ENCODE measurements at regions of chr3 and their contacts with region 1.

Region 1: DNA sequence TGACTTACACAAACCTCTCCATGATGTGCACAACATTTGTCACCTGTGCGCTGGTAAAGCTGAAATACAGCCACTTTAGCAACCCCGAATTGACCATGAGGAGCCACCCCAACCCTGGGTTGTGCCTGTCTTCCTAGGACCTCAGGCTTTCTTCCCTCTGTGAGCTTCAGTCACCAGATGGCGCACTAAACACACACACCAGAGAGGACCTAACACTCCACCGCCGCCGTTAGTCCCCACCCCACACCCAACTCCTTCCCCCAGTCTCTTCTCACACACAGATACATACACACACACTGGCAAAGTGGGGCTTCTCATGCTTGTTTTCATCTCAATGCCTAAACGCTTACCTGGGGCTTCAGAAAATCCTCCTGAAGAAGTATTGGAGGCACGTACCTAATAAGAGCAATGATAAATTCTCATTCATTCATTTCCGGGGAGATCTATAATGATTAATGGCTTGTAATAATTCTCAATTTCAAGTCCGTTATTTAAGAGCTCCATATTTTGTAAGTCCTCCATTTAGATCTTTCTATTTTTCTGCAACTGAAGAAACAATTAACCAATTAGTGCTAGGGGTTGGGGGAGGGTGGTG is 2.1 kb upstream of the CCDC80 start:
- DNase-seq: peak; percentile 92
- ATAC-seq: peak; percentile 96
- H3K4me3 Mint-ChIP-seq: peak overlapping the region; percentile 38
- H3K27ac Mint-ChIP-seq: no peak overlapping the region
- H3K4me1 Mint-ChIP-seq: peaks cover 15% of the 10 kb centered on the region
- H3K27me3 Mint-ChIP-seq: peaks cover 17% of the 10 kb centered on the region
- CTCF ChIP-seq: peak; percentile 71

Region 2: DNA sequence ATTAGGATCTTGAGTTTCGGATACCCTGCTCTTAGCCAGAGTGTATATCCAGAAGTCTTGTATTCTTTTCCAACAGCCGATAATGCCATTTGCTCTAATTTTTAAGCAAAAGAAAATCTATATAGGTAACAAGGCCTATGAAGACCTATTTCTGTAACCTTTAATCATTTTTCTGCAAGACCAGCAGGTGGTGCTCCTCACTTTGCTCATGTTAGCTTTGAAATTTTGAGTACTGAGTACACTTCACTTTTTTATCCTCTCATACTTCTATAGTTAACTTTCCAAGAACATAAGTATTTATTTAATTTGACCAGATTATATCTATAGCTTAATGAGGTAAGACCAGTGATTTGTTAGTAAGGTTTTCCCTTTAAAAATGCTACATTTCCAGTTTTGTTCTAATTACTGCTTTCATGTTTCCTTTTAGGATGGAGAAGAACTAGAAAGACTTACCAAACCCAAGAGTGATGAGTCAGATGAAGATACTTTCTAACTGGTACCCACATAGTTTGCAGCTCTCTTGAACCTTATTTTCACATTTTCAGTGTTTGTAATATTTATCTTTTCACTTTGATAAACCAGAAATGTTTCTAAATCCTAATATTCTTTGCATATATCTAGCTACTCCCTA is 60.6 kb before region 1 on chr3:
- CTCF ChIA-PET with region 1: interaction called, 28 read pairs
- POLR2A ChIA-PET with region 1: no interaction called
- intact Hi-C with region 1: no loop called
- DNase-seq: peak; percentile 24
- ATAC-seq: peak; percentile 55
- H3K4me3 Mint-ChIP-seq: no peak overlapping the region
- H3K27ac Mint-ChIP-seq: no peak overlapping the region
- H3K4me1 Mint-ChIP-seq: peaks cover 4% of the 10 kb centered on the region
- H3K27me3 Mint-ChIP-seq: no peaks in the 10 kb centered on the region
- CTCF ChIP-seq: peak; percentile 43

Region 3: DNA sequence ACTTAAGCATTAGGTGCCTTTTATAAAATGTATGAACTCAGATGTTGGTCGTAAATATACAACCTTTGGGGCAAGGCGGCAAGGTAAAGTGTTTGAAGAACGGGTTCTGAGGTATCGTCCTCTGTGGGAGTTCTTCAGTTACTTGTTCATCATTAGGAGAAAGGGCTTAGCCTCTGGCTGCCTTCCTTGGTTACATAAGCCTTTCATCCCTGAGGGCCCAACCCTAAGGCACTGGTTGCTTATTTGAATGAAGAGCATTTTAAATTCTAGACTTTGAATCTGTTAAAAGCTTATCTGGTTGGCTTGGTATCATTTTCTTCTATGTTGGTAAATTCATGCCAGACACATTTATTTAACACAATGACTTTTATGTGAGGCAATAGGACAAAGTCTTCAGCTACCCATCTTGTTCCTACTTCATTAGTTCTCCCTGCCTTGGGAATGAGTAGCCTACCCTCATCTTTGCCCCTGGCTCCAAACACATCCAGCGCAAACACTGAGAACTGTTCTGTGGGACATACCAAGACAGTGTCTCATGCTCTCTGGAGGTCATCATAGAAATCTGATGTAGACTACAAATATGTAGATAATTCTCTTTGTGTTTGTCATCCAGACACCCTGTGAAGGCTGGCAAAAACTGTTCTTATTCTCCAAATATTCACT is 10.3 kb after region 1 on chr3:
- CTCF ChIA-PET with region 1: interaction called, 37 read pairs
- POLR2A ChIA-PET with region 1: no interaction called
- intact Hi-C with region 1: no loop called
- DNase-seq: no peak
- ATAC-seq: no peak
- H3K4me3 Mint-ChIP-seq: no peak overlapping the region
- H3K27ac Mint-ChIP-seq: no peak overlapping the region
- H3K4me1 Mint-ChIP-seq: peaks cover 9% of the 10 kb centered on the region
- H3K27me3 Mint-ChIP-seq: no peaks in the 10 kb centered on the region
- CTCF ChIP-seq: no peak

Region 4: DNA sequence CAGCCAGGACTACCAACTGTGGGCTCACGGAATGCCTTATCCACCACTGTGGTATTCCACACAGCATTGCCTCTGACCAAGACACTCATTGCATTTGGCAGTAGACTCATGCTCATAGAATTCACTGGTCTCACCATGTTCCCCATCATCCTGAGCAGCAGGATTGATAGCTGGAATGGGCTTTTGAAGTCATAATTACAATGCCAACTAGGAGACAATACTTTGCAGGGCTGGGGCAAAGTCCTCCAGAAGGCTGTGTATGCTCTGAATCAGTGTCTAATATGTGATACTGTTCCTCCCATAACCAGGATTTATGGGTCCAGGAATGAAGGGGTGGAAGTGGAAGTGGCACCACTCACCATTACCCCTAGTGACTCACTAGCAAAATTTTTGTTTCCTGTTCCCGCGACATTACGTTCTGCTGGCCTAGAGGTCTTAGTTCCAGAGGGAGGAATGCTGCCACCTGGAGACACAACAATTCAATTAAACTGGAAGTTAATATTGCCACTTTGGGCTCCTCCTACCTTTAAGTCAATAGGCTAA is 56.5 kb after region 1 on chr3:
- CTCF ChIA-PET with region 1: interaction called, 10 read pairs
- POLR2A ChIA-PET with region 1: no interaction called
- intact Hi-C with region 1: no loop called
- DNase-seq: no peak
- ATAC-seq: no peak
- H3K4me3 Mint-ChIP-seq: no peak overlapping the region
- H3K27ac Mint-ChIP-seq: no peak overlapping the region
- H3K4me1 Mint-ChIP-seq: no peaks in the 10 kb centered on the region
- H3K27me3 Mint-ChIP-seq: peaks cover 7% of the 10 kb centered on the region
- CTCF ChIP-seq: no peak

Region 5: GRCh38 chr3:112973325-112974177 is 330.5 kb after region 1 on chr3:
- CTCF ChIA-PET with region 1: interaction called, 63 read pairs
- POLR2A ChIA-PET with region 1: no interaction called
- intact Hi-C with region 1: no loop called
- DNase-seq: peak; percentile 77
- ATAC-seq: peak; percentile 81
- H3K4me3 Mint-ChIP-seq: peak overlapping the region; percentile 73
- H3K27ac Mint-ChIP-seq: peak overlapping the region; percentile 82
- H3K4me1 Mint-ChIP-seq: peaks cover 85% of the 10 kb centered on the region
- H3K27me3 Mint-ChIP-seq: no peaks in the 10 kb centered on the region
- CTCF ChIP-seq: no peak

Region 6: DNA sequence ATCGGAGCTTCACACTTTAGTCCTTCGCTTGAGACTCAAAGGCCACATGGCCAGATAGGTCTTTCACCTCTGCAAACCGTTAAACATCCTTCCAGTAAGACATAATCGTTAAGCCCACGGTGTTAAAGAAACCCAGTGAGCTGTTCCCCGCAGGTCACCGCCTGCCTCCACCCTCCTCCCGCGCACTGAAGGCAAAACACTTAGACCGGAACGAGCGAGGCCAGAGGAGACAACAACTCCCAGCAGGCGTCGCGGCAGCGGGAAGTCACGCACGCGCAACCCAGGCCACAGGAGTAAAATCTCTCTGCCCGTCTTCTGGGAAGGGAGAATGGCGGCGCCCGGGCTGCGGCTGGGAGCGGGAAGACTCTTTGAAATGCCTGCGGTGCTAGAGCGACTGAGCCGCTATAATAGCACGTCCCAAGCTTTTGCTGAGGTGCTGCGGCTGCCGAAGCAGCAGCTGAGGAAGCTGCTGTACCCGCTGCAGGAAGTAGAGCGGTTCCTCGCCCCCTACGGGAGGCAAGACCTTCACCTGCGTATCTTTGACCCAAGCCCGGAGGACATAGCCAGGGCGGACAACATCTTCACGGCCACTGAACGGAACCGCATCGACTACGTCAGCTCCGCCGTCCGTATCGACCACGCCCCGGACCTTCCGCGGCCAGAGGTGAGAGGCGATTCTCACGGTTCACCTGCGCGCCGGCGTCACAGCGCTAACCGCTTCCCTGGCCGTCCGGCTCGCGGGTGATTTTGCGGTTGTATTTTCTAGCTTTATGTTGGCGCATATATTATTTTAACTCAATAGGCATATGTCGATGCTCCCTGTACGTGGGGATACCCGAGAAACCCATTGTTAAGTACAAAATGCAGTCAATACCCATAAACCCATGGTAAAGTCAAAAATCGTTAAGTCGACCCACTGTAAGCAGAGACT is 347.9 kb after region 1 on chr3 and contains the start of gene GTPBP8:
- CTCF ChIA-PET with region 1: interaction called, 10 read pairs
- POLR2A ChIA-PET with region 1: no interaction called
- intact Hi-C with region 1: no loop called
- DNase-seq: peak; percentile 92
- ATAC-seq: peak; percentile 94
- H3K4me3 Mint-ChIP-seq: peak within 1 kb of the TSS; percentile 89
- H3K27ac Mint-ChIP-seq: peak within 1 kb of the TSS; percentile 97
- H3K4me1 Mint-ChIP-seq: peaks cover 57% of the 10 kb centered on the region
- H3K27me3 Mint-ChIP-seq: no peaks in the 10 kb centered on the region
- CTCF ChIP-seq: no peak
- total RNA-seq, gene GTPBP8: 24.7 to 28.0 TPM